SK-N-SH (cell line): ENCODE measurements at regions of chr15 and their contacts with region 1.

Region 1: DNA sequence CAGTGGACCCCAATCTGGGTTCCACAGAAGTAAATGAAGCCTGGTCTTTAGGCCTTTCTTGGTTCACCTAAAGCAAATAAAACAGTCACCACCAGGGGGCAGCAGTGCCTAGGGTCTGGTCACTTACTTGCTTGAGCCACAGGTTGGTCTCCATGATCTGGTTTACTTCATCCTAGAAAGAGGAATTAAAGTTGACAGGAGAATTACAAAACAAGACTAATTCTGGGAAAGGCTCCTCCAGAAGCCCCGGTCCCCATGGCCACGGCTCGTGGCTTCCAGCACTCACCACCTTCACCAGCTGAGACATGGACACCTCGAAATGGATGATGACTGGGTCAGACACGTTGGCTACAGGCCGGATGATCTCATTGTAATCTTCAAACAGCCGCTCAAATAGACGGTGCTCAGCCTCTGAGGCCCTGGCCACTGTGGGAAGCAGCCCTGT is 2.3 kb downstream of the CHRNA3 start:
- DNase-seq: peak; percentile 89
- H3K4me3 ChIP-seq: peak overlapping the region; percentile 16 to 59; a peak in 2 of 4 replicates
- H3K27ac ChIP-seq: peak overlapping the region; percentile 30 to 99; a peak in 3 of 4 replicates
- H3K4me1 ChIP-seq: peaks cover 4 to 43% of the 10 kb centered on the region in 2 experiments; a peak in 2 of 4 replicates
- H3K27me3 ChIP-seq: peaks cover 36% of the 10 kb centered on the region
- CTCF ChIP-seq: peak; percentile 93
- EP300 ChIP-seq: peak; percentile 91 to 93
- RAD21 ChIP-seq: peak; percentile 94

Region 2: GRCh38 chr15:78630886-78631633 is 12.5 kb after region 1 on chr15:
- CTCF ChIA-PET with region 1: interaction called, 57 read pairs
- POLR2A ChIA-PET with region 1: interaction called, 3 read pairs
- DNase-seq: no peak
- H3K4me3 ChIP-seq: no peak overlapping the region
- H3K27ac ChIP-seq: no peak overlapping the region; a peak in 1 of 4 replicates
- H3K4me1 ChIP-seq: peaks cover 0 to 19% of the 10 kb centered on the region in 2 experiments; a peak in 1 of 4 replicates
- H3K27me3 ChIP-seq: peaks cover 22% of the 10 kb centered on the region
- CTCF ChIP-seq: no peak
- EP300 ChIP-seq: no peak
- RAD21 ChIP-seq: no peak

Region 3: DNA sequence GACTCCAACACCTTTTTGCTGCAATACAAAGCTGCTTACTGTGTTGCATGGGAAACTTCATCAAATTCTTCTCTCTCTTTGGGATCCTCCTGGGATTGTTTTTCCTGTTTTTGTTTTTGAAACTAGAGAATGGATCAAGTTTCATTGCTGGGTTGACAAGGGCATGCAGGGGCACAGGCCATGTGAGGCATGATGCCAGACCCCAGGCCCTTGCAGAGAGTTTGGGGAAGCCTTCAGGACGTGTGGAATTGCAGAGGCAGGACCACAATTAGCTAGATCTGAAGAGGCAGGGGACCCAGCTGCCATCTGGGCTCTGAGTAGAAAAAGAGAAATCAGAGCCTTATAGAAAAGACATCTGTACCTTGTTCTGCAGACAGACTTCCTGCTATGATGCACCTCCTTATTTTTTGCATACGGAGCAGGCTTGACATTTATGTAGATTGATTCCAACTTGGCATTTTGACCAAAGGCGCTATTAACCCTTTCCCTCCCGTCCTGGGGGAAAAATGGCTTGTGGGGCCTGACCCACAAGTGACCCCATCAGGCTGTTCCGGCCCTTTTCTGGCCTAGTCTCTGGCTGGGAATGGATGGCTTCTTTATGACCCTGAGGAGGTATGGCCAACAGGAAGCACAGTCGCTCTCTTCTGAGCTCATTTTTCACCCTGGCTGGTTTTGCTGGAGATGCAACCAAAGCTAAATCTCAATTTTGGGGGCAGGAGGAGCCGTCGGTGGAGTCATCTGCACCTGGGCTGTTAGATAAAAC is 66.8 kb after region 1 on chr15:
- CTCF ChIA-PET with region 1: interaction called, 13 read pairs
- POLR2A ChIA-PET with region 1: interaction called, 15 read pairs
- DNase-seq: peak; percentile 32
- H3K4me3 ChIP-seq: no peak overlapping the region
- H3K27ac ChIP-seq: peak overlapping the region in 1 of 2 experiments; percentile 93; a peak in 2 of 4 replicates
- H3K4me1 ChIP-seq: peaks cover 0 to 53% of the 10 kb centered on the region in 2 experiments; a peak in 2 of 4 replicates
- H3K27me3 ChIP-seq: peaks cover 6% of the 10 kb centered on the region; the same call in 1 of the 2 replicates
- CTCF ChIP-seq: no peak
- EP300 ChIP-seq: peak in 1 of 2 experiments; percentile 65; a peak in 1 of 4 replicates
- RAD21 ChIP-seq: no peak

Region 4: DNA sequence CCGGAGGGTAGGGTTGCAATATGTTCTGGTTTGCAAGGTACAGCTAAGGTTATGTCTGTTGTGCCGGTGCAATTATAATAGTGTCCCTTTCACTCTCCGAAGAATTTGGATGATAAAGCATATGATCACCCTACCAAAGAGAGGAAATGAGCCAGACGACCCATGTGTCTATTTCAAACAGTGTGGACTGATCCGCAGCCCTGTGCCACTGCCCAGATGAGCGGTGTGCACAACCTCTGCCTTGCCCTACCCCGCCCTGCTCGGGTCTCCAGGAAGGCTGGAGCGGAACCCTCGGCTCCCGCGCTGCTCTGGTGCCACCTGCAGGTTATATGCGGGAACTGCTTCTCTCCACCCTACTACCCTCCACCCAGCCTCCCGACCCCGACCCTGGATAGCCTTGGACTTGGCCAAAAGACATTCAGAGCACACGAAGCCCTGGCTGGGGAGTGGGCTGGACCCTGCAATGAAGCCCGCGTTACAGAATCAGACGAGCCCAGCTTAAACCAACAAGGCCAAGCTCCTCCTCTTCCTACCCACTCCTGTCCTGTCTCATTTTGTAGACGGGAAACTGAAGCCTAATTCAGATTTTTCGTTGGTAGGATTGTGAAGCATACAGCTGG is 90.9 kb after region 1 on chr15:
- CTCF ChIA-PET with region 1: interaction called, 48 read pairs
- POLR2A ChIA-PET with region 1: interaction called, 23 read pairs
- DNase-seq: peak; percentile 84
- H3K4me3 ChIP-seq: peak overlapping the region; percentile 30 to 52; a peak in 3 of 4 replicates
- H3K27ac ChIP-seq: peak overlapping the region in 1 of 2 experiments; percentile 98; a peak in 2 of 4 replicates
- H3K4me1 ChIP-seq: peaks cover 0 to 22% of the 10 kb centered on the region in 2 experiments; a peak in 2 of 4 replicates
- H3K27me3 ChIP-seq: peaks cover 10% of the 10 kb centered on the region; the same call in 1 of the 2 replicates
- CTCF ChIP-seq: peak; percentile 85
- EP300 ChIP-seq: no peak
- RAD21 ChIP-seq: peak; percentile 94